Activated CD4-positive, alpha-beta memory T cell treated with anti-CD3 and anti-CD28 coated beads for 36 hours (primary cell): ENCODE measurements at regions of chr3 and their contacts with region 1.

Region 1: GRCh38 chr3:164879201-164879600 is 199.1 kb downstream of the SI start:
- DNase-seq: no peak
- H3K4me3 Mint-ChIP-seq: no peak overlapping the region
- H3K27ac Mint-ChIP-seq: no peak overlapping the region
- H3K4me1 Mint-ChIP-seq: no peaks in the 10 kb centered on the region
- H3K27me3 Mint-ChIP-seq: no peaks in the 10 kb centered on the region

Region 2: DNA sequence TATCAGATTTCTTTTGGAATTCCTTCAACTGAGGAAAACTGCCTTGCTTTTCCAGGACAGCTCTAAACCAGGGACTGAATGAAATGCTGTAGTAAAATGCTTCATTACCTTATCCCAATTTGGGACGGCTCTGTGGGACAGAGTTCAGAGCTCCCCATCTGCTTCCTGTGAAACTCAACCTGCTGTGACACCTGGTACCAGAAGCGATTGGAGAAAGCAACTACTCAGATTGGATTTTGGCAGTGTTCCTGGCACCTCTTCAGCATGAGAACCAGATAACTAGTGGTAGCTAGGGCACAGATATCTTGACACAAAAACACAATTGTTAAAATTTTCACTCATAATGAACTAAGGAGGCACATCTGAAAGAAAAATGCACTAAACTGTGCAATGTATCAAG is 340.0 kb before region 1 on chr3:
- CTCF ChIA-PET with region 1: no interaction called
- POLR2A ChIA-PET with region 1: no interaction called
- intact Hi-C with region 1: no loop called
- DNase-seq: no peak
- H3K4me3 Mint-ChIP-seq: no peak overlapping the region
- H3K27ac Mint-ChIP-seq: no peak overlapping the region
- H3K4me1 Mint-ChIP-seq: no peaks in the 10 kb centered on the region
- H3K27me3 Mint-ChIP-seq: no peaks in the 10 kb centered on the region

Region 3: DNA sequence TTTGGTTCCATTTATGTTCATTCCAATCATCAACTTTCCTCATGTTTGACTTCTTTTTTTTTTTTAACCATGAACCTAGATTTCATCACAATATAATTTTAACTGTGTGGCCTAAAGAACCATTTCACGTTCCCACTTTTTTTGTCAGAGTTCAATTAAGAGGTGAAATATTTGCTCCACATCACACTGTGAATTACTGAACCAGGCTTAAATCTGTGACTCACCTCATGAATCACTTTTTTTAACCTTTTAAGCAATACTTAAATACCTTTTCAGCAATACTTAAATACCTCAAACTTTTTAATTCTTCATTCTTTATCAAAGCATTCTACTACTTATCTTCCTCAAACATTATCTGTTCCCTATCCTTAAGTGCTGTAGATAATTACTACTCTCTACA is 61.5 kb after region 1 on chr3:
- CTCF ChIA-PET with region 1: no interaction called
- POLR2A ChIA-PET with region 1: no interaction called
- intact Hi-C with region 1: loop called (anchors 2 kb)
- DNase-seq: no peak
- H3K4me3 Mint-ChIP-seq: no peak overlapping the region
- H3K27ac Mint-ChIP-seq: no peak overlapping the region
- H3K4me1 Mint-ChIP-seq: no peaks in the 10 kb centered on the region
- H3K27me3 Mint-ChIP-seq: no peaks in the 10 kb centered on the region